ENCODE measurements at regions of chr2 and their contacts with region 1.

Region 1: GRCh38 chr2:73268830-73269685 is 15.2 kb downstream of the FBXO41 start:
- DNase-seq: peak; percentile 57 to 92 (median 80)
- ATAC-seq: peak; percentile 96
- H3K4me3 ChIP-seq: peak overlapping the region; percentile 58
- H3K4me3 Mint-ChIP-seq: peak overlapping the region; percentile 83
- H3K27ac ChIP-seq: no peak overlapping the region
- H3K27ac Mint-ChIP-seq: peak overlapping the region; percentile 75
- H3K4me1 ChIP-seq: peaks cover 10% of the 10 kb centered on the region
- H3K4me1 Mint-ChIP-seq: peaks cover 28% of the 10 kb centered on the region
- H3K27me3 ChIP-seq: no peaks in the 10 kb centered on the region
- H3K27me3 Mint-ChIP-seq: no peaks in the 10 kb centered on the region
- CTCF ChIP-seq: peak; percentile 13

Region 2: GRCh38 chr2:73250872-73251846 is 17.9 kb before region 1 on chr2:
- CTCF ChIA-PET with region 1: no interaction called
- POLR2A ChIA-PET with region 1: no interaction called
- intact Hi-C with region 1: loop called in 1 of 2 experiments (anchors 2 kb)
- DNase-seq: no peak
- ATAC-seq: no peak
- H3K4me3 ChIP-seq: no peak overlapping the region
- H3K4me3 Mint-ChIP-seq: no peak overlapping the region
- H3K27ac ChIP-seq: no peak overlapping the region
- H3K27ac Mint-ChIP-seq: no peak overlapping the region
- H3K4me1 ChIP-seq: no peaks in the 10 kb centered on the region
- H3K4me1 Mint-ChIP-seq: peaks cover 2% of the 10 kb centered on the region
- H3K27me3 ChIP-seq: no peaks in the 10 kb centered on the region
- H3K27me3 Mint-ChIP-seq: no peaks in the 10 kb centered on the region
- CTCF ChIP-seq: no peak

Region 3: GRCh38 chr2:73293534-73294171 is 24.6 kb after region 1 on chr2 and contains the start of gene EGR4:
- CTCF ChIA-PET with region 1: no interaction called
- POLR2A ChIA-PET with region 1: interaction called, 5 read pairs
- intact Hi-C with region 1: loop called in 1 of 2 experiments (anchors 2 kb)
- DNase-seq: peak; percentile 78 to 96 (median 84)
- ATAC-seq: peak; percentile 94
- H3K4me3 ChIP-seq: peak within 1 kb of the TSS; percentile 48
- H3K4me3 Mint-ChIP-seq: peak within 1 kb of the TSS; percentile 82
- H3K27ac ChIP-seq: no peak within 1 kb of the TSS
- H3K27ac Mint-ChIP-seq: no peak within 1 kb of the TSS
- H3K4me1 ChIP-seq: peaks cover 30% of the 10 kb centered on the region
- H3K4me1 Mint-ChIP-seq: peaks cover 21% of the 10 kb centered on the region
- H3K27me3 ChIP-seq: peaks cover 61 to 79% of the 10 kb centered on the region in 2 experiments
- H3K27me3 Mint-ChIP-seq: peaks cover 91% of the 10 kb centered on the region
- CTCF ChIP-seq: no peak
- total RNA-seq, gene EGR4: 0.14 to 0.17 TPM

Region 4: DNA sequence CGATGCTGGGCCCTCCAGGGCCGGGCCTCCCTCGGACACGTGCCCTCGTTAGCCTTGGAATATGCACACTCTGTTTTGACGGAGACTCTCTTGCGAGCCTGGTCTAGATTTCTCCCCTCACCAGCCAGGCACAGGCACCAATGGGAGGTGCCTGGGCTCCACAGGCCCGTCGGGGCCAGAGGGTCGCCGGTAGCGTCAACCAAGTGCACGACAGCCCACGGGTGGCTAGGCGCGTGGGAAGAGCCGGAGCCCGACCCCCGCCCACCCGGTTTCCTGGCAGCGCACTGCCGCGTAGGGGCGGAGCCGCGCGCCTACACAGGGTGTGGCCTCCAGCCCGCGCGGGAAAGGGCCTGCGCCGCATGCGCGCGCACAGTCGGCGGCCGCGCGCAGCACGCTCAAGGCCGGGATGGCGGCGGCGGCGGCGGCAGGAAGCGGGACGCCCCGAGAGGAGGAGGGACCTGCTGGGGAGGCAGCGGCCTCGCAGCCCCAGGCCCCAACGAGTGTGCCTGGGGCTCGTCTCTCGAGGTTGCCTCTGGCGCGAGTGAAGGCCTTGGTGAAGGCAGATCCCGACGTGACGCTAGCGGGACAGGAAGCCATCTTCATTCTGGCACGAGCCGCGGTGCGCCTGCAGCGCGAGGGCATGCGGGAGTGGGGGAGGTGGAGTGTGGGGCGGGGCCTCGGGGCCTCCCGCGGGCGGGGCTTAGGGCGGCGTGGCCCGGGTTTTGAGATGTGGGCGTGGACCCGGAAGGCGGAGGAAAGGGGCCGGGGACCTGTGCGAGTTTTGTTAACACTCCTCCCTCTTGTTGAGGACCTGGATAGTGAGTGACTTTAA is 1689.4 kb after region 1 on chr2 and contains the start of gene POLE4:
- CTCF ChIA-PET with region 1: no interaction called
- POLR2A ChIA-PET with region 1: no interaction called
- intact Hi-C with region 1: no loop called
- DNase-seq: peak; percentile 89 to 96 (median 92)
- ATAC-seq: peak; percentile 87
- H3K4me3 ChIP-seq: peak within 1 kb of the TSS; percentile 60
- H3K4me3 Mint-ChIP-seq: peak within 1 kb of the TSS; percentile 87
- H3K27ac ChIP-seq: peak within 1 kb of the TSS; percentile 73 to 86
- H3K27ac Mint-ChIP-seq: peak within 1 kb of the TSS; percentile 83
- H3K4me1 ChIP-seq: peaks cover 22% of the 10 kb centered on the region
- H3K4me1 Mint-ChIP-seq: peaks cover 71% of the 10 kb centered on the region
- H3K27me3 ChIP-seq: no peaks in the 10 kb centered on the region
- H3K27me3 Mint-ChIP-seq: no peaks in the 10 kb centered on the region
- CTCF ChIP-seq: no peak
- total RNA-seq, gene POLE4: 34.9 to 38.4 TPM

Measured in CD4-positive, alpha-beta T cell (primary cell).